Activated CD8-positive, alpha-beta T cell treated with anti-CD3 and anti-CD28 coated beads for 36 hours (primary cell): ENCODE measurements at regions of chr9 and their contacts with region 1.

Region 1: GRCh38 chr9:19028835-19029451 is 4.1 kb downstream of the SAXO1 start:
- DNase-seq: peak; percentile 41
- ATAC-seq: peak; percentile 51
- H3K4me3 Mint-ChIP-seq: no peak overlapping the region
- H3K27ac Mint-ChIP-seq: no peak overlapping the region
- H3K4me1 Mint-ChIP-seq: peaks cover 7% of the 10 kb centered on the region
- H3K27me3 Mint-ChIP-seq: peaks cover 8% of the 10 kb centered on the region
- CTCF ChIP-seq: peak; percentile 92

Region 2: DNA sequence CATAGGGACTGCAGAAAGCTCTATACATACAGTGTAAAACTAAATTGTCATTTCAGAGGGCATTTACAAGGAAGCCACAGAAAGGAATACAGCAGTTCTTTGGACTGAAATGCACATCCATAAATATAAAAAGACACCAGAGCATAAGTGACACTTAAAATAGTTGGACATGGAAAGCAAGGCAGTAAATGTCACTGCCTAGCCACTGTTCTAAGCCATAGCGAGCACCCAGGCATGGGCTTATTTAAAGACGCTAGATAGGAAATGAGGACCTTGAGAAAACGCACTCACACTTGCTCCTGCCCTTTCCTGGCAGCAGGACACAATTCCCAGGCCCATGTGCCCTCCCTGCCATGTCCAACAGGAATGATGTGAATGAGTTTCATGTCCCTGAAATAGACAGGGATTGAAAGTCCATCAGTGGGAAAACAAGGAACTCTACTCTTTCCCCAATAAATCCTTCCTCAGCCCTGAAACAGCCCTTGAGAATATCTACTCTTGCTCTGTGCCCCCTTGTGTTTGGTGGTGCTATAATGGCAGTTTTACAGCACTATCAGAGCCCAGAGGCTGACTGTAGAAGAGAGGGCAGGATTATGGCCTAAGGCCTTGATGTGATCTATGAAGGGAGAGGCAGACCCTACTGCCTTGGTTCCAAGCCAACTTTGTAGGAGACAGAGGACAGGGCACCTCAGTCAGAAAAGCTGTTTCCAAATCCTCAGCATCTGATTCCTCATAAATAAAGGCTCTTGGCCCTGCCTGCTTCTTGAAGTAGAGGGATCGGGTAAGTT is 178.9 kb before region 1 on chr9:
- CTCF ChIA-PET with region 1: no interaction called
- POLR2A ChIA-PET with region 1: no interaction called
- intact Hi-C with region 1: no loop called
- DNase-seq: no peak
- ATAC-seq: no peak
- H3K4me3 Mint-ChIP-seq: no peak overlapping the region
- H3K27ac Mint-ChIP-seq: no peak overlapping the region
- H3K4me1 Mint-ChIP-seq: no peaks in the 10 kb centered on the region
- H3K27me3 Mint-ChIP-seq: no peaks in the 10 kb centered on the region
- CTCF ChIP-seq: no peak

Region 3: GRCh38 chr9:18874069-18874468 is 154.9 kb before region 1 on chr9:
- CTCF ChIA-PET with region 1: no interaction called
- POLR2A ChIA-PET with region 1: no interaction called
- intact Hi-C with region 1: no loop called
- DNase-seq: no peak
- ATAC-seq: no peak
- H3K4me3 Mint-ChIP-seq: no peak overlapping the region
- H3K27ac Mint-ChIP-seq: no peak overlapping the region
- H3K4me1 Mint-ChIP-seq: no peaks in the 10 kb centered on the region
- H3K27me3 Mint-ChIP-seq: peaks cover 7% of the 10 kb centered on the region
- CTCF ChIP-seq: no peak

Region 4: GRCh38 chr9:18905028-18905882 is 123.7 kb before region 1 on chr9:
- CTCF ChIA-PET with region 1: no interaction called
- POLR2A ChIA-PET with region 1: no interaction called
- intact Hi-C with region 1: no loop called
- DNase-seq: no peak
- ATAC-seq: no peak
- H3K4me3 Mint-ChIP-seq: no peak overlapping the region
- H3K27ac Mint-ChIP-seq: no peak overlapping the region
- H3K4me1 Mint-ChIP-seq: no peaks in the 10 kb centered on the region
- H3K27me3 Mint-ChIP-seq: peaks cover 1% of the 10 kb centered on the region
- CTCF ChIP-seq: no peak

Region 5: DNA sequence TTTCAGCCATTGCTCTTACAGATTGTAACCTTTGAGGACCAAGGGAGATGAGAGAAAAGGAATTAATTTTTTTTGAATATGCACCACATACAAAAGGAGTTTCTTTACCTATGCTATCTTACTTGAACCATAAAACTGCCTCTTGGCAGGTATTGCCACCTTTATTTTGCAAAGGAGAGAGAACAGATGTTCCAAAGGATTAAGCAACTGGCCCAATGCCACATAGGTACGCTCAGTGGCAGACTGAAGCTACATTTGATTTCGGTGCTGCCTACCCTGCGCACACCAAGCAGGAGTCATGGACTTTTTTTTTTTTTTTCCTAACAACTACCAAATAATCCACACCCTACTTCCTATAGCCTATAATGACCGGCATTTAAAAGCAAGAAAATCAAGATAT is 39.1 kb before region 1 on chr9:
- CTCF ChIA-PET with region 1: no interaction called
- POLR2A ChIA-PET with region 1: no interaction called
- intact Hi-C with region 1: no loop called
- DNase-seq: no peak
- ATAC-seq: no peak
- H3K4me3 Mint-ChIP-seq: no peak overlapping the region
- H3K27ac Mint-ChIP-seq: no peak overlapping the region
- H3K4me1 Mint-ChIP-seq: no peaks in the 10 kb centered on the region
- H3K27me3 Mint-ChIP-seq: no peaks in the 10 kb centered on the region
- CTCF ChIP-seq: no peak

Region 6: DNA sequence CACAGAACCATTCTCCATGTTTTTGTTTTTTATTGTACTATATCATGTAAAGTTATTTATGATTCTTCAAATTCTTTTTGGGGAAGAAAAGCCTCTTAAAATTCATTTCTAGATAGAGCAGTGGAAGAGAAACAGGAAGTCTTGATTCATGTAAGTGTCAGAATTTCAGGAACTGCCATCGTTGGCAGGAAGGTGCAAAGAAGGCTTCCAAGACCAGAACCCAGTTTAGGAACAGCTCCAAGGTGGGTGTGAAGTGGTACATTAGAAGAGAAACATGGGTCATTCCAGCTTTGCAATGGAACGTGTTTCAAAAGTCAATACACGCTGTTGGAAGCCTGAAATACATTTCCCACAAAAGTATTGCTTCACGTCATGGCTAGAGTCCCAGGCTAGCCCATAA is 10.7 kb before region 1 on chr9:
- CTCF ChIA-PET with region 1: interaction called, 17 read pairs
- POLR2A ChIA-PET with region 1: interaction called, 3 read pairs
- intact Hi-C with region 1: no loop called
- DNase-seq: no peak
- ATAC-seq: no peak
- H3K4me3 Mint-ChIP-seq: no peak overlapping the region
- H3K27ac Mint-ChIP-seq: no peak overlapping the region
- H3K4me1 Mint-ChIP-seq: no peaks in the 10 kb centered on the region
- H3K27me3 Mint-ChIP-seq: no peaks in the 10 kb centered on the region
- CTCF ChIP-seq: no peak